ENCODE measurements at regions of chr10 and their contacts with region 1.

Region 1: DNA sequence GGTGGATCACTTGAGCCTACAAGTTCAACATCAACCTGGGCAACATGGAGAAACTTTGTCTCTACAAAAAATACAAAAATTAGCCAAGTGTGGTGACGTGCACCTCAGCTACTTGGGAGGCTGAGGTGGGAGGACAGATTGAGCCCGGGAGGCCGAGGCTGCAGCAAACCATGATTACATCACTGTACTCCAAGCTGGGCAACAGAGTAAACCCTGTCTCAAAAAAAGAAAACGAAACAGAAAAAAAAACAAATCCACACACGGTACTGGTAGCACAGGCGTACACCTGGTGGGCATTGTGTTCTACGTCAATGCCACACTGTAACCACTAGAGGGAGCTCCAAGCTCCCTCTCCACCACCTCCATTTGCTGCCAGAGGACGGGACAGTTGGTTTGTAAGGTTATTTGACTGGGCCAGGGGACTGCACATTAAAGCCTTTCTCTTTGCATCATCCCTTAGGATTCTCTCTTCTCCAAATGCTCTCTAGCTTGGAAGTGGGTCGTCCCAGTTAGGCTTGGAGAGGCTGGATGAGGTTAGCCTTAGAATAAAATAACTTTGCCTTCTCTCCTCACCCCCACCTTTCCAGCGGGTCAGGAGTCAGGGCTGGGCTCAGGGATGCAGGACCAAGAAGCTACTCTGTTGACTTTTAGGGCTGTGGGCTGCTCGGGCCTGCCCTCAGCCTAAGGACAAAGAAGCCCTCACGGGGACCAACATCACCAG is 130.8 kb downstream of the SORBS1 start:
- DNase-seq: peak; percentile 39
- ATAC-seq: peak; percentile 70 to 78

Region 2: DNA sequence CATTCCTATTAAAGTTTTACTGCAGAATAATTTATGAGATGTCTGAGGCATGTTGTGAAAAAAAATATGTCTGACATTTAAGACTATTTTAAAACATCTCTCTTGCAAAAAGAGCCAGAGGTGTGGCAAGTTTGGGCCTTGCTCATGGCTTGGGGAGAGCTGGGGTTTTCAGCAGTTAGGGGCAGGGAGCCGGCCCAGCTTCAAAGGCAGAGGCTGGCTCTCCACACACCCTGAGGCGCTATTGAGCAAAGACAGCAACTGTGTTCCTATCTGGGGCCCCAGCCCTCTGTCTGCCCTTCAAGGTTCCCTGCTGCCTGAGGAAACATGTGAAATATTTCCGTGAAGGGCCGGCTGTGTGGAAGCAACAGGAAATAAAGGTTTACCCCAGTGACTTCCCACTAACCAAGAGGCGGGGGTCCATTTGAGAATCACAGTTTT is 36.8 kb after region 1 on chr10:
- intact Hi-C with region 1: loop called in 1 of 2 experiments (anchors 5 kb)
- DNase-seq: peak; percentile 76
- ATAC-seq: peak; percentile 85 to 88

Region 3: GRCh38 chr10:95561182-95562075 is 131.0 kb after region 1 on chr10 and contains the start of gene SORBS1:
- intact Hi-C with region 1: loop called in 1 of 2 experiments (anchors 10 kb)
- DNase-seq: peak; percentile 97
- ATAC-seq: peak; percentile 99
- total RNA-seq, gene SORBS1: 465 to 617 TPM

Region 4: DNA sequence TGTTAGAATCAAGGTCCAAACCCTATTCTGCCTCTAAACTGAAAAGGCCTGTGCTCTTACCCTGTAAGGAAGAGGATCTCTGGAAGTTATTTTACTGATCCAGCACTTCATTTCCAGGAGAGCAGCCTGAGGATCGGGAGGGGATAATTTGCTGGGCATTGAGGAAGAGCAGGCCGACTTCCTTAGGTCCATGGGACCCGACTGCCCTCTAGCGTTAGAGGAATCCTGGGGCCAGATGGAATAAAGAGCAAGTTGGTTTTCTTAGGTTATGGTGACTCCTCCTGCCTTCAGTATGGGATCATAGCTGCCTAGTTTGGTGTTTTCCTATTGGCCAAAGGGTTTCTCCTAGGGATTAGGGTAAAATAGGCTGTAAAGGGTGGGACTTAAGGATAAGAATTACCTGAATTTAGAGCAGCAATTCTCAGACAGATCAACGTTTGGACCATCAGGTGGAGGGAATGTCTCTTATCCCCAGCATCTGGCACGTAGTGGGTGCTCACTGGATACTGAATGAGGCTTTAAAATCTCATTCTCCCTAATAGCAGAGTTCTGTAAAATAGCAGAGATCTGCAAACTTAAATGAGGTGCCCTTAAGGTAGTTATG is 170.8 kb after region 1 on chr10:
- intact Hi-C with region 1: loop called (anchors 1 to 2 kb)
- DNase-seq: peak; percentile 81
- ATAC-seq: peak; percentile 88 to 92

Measured in left cardiac atrium (tissue), 4 donors.